Activated CD4-positive, alpha-beta T cell treated with anti-CD3 and anti-CD28 coated beads for 36 hours (primary cell): ENCODE measurements at regions of chr7 and their contacts with region 1.

Region 1: GRCh38 chr7:82950436-82950835 is 212.2 kb downstream of the PCLO start:
- DNase-seq: no peak
- ATAC-seq: no peak
- H3K4me3 Mint-ChIP-seq: no peak overlapping the region
- H3K27ac Mint-ChIP-seq: no peak overlapping the region
- H3K4me1 Mint-ChIP-seq: no peaks in the 10 kb centered on the region
- H3K27me3 Mint-ChIP-seq: no peaks in the 10 kb centered on the region

Region 2: DNA sequence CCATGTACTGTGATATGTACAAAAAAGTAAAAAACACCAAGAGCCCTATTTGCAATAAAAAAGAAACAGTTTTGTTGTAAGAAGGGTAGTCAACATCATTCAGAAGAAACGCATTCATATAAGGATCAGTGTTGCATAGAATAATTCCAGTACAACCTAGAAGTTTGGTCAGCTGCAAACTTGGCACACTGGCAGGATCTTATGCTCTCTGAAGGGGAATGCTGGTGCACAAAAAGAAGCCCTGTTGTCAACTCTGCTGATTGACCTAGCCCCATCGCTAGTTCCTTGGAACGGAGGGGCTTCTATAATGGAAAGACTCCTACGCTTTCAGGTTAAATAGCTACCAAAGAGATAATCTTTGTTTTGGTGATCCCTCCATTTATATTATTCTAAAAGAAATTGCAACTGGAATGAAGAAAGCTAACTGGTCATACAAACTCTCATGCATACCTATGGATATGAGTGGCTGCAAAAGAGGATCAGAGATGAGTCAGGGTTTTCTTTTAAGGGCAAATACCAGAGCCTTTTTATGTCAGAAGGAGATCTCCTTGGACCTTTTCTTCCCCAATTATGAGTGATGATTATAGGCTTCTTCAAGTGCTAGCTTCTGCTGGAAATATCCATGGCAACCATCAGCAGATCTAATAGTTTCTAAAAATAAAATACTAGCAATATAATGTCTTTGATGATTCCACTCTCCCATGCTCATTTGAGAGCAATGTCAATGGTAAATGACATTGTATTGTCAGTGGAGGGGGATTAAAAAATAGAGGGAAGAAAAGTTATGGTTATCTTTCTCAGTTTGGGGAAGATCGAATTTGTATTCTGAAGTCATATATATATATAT is 194.5 kb before region 1 on chr7:
- CTCF ChIA-PET with region 1: no interaction called
- POLR2A ChIA-PET with region 1: no interaction called
- intact Hi-C with region 1: no loop called
- DNase-seq: no peak
- ATAC-seq: no peak
- H3K4me3 Mint-ChIP-seq: no peak overlapping the region
- H3K27ac Mint-ChIP-seq: no peak overlapping the region
- H3K4me1 Mint-ChIP-seq: no peaks in the 10 kb centered on the region
- H3K27me3 Mint-ChIP-seq: no peaks in the 10 kb centered on the region

Region 3: DNA sequence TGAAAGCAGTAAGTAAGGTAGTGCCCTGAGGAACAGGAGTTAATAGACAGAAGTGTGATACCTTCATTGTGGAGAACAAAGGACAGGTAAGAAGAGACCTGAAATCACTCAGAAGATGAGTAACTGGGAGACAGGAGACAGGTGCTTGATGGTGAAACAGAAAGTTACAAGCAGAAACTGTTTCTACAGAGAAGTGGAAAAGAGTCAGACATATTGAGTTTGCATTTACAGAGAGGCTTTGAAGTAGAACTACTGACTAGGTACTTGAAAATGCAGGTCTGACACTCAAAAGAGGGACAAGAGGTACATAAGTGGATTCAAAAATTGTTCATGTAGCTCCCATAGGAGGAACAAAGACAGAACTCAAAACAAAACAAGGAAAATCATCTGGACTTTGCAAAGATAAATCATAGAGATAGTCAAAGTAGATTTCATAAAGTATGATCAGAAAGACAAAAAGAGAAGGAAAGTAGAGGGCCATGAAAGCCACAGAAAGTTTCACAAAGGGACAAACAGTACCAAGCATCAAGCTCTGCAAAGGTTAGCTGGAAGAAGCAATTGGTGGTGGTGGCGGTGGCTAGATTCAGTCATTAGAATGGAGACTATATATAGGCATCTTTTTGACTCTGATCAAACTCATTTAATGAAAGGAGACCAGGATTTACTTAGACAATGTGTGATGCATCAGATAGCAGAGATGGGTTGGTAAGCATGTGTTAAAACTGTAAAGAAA is 13.9 kb after region 1 on chr7:
- CTCF ChIA-PET with region 1: no interaction called
- POLR2A ChIA-PET with region 1: no interaction called
- intact Hi-C with region 1: loop called in 1 of 2 experiments (anchors 1 kb)
- DNase-seq: no peak
- ATAC-seq: no peak
- H3K4me3 Mint-ChIP-seq: no peak overlapping the region
- H3K27ac Mint-ChIP-seq: no peak overlapping the region
- H3K4me1 Mint-ChIP-seq: no peaks in the 10 kb centered on the region
- H3K27me3 Mint-ChIP-seq: no peaks in the 10 kb centered on the region